Ascending aorta (tissue), 2 donors: ENCODE measurements at regions of chr17 and their contacts with region 1.

Region 1: GRCh38 chr17:7280519-7281429 is 744 bp upstream of the SLC2A4 start:
- DNase-seq: peak; percentile 38 to 89
- H3K4me3 ChIP-seq: peak overlapping the region; percentile 56
- H3K27ac ChIP-seq: peak overlapping the region; percentile 73 to 81
- H3K4me1 ChIP-seq: peaks cover 9 to 16% of the 10 kb centered on the region in 2 donors
- H3K27me3 ChIP-seq: no peaks in the 10 kb centered on the region
- CTCF ChIP-seq: peak; percentile 90 to 94 (median 94)

Region 2: GRCh38 chr17:7214300-7215135 is 66.3 kb before region 1 on chr17:
- intact Hi-C with region 1: loop called (anchors 2 kb)
- DNase-seq: peak; percentile 96 to 99
- H3K4me3 ChIP-seq: peak overlapping the region; percentile 62 to 72
- H3K27ac ChIP-seq: peak overlapping the region; percentile 96 to 100
- H3K4me1 ChIP-seq: peaks cover 20 to 27% of the 10 kb centered on the region in 2 donors
- H3K27me3 ChIP-seq: no peaks in the 10 kb centered on the region
- CTCF ChIP-seq: peak; percentile 13 to 47 (median 41)

Region 3: DNA sequence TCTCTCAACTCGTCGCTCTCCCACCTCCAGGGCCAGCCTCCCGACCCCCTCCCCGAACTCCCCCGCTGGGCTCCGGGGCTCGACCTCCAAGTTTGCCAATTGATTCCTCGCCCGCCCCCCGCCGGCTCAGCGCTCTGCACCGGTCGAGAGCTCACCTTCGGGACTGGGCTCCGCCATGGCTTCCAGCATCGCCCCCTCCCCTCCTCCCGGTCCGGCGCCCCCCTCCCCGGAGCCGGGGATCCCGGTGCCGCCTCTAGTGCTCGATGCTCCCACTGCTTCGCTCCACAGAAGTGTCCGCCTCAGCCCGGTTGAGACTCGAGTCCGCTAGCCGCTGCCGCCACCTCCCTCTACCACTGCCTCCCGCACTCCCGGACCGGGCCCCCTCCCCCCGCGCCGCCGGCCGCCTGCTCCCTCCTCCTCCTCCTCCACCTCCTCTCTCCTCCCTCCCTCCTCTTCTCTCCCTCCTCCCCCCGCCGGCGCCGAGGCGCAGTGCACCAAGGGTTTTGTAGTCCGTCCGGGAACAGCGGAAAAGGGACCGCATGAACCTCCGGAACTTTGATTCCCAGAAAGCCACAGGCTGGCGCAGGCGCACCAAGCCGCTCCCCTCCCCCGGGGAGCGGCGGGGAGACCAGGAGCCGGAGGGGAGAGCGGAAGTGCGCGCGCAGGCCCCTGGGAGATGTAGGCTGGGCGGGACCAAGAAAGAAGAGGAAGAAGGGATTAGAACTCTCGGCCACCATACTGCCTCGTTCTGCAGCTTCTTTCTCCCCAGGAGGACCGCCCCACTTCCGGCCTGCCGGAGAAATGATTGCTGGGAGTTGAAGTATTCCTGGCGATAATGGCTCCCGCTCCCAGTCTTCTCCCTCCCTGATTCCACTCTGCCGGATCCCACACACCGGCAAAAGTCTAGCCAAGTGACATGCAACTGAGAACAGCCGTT is 41.4 kb before region 1 on chr17 and contains the start of gene PHF23:
- intact Hi-C with region 1: no loop called
- DNase-seq: peak; percentile 99 to 100
- H3K4me3 ChIP-seq: peak within 1 kb of the TSS; percentile 92 to 99
- H3K27ac ChIP-seq: peak within 1 kb of the TSS; percentile 88 to 96
- H3K4me1 ChIP-seq: peaks cover 12 to 25% of the 10 kb centered on the region in 2 donors
- H3K27me3 ChIP-seq: no peaks in the 10 kb centered on the region
- CTCF ChIP-seq: peak in 1 of 3 experiments; percentile 37
- total RNA-seq, gene PHF23: 13.3 TPM

Region 4: DNA sequence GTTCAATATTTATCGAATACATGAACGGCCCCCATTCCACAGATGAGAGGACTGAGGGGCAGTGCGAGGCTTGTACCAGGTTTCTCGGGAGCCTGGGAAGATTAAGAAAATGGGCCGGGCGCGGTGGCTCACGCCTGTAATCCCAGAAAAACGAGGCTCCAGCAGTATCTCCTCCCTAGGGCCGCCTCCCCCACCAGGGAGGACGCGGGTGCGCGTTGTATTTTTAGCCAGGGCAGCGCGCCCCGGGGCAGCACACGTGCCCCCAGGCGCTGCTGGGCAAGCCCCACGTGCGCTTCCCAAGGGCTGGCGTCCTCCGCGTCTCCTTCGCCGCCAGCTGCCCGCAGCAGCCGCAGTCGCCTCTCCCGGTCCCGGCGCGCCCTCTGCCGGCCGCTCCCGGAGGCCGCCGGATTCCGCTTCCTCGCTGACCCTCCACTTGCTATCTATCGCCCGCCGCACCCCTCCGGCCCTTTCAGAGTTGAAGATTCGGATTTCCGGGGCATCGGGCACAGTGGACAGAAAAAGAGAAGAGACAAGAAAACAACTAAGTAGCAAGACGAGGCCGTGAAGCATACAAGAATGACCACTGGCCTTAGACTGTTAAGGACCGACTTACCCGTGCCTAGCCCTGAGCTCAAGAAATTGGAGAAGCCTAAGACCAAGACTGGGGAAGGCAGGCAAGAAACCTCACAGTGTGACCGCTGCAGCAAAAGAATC is 15.6 kb after region 1 on chr17:
- intact Hi-C with region 1: loop called (anchors 1 kb)
- DNase-seq: peak in 1 of 2 donors; percentile 89
- H3K4me3 ChIP-seq: peak overlapping the region in 1 of 2 donors; percentile 33
- H3K27ac ChIP-seq: peak overlapping the region in 1 of 2 donors; percentile 34
- H3K4me1 ChIP-seq: peaks cover 4 to 22% of the 10 kb centered on the region in 2 donors
- H3K27me3 ChIP-seq: peaks cover 8% of the 10 kb centered on the region
- CTCF ChIP-seq: peak; percentile 95 to 97 (median 96)